PC-9 (cell line): ENCODE measurements at regions of chr17 and their contacts with region 1.

Region 1: DNA sequence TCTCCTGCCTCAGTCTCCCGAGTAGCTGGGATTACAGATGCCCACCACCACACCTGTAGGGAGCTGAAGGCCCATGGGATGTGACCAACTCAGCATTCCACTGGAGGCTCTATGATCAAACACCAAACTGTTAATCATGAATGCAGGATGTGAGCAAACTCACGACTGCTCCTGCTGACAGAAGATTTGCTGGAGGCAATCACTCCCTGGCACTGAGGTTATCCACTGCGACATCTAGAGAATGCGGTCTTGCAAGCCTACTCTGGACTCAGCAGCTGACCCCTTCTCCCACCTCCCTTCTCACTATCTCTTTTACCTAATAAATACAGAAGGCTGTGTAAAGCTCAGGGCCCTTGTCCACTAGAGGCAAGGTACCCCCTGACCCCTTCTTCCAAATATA is 4.9 kb downstream of the TEX14 start:
- DNase-seq: peak in 1 of 2 experiments; percentile 65
- H3K4me3 ChIP-seq: no peak overlapping the region
- H3K27ac ChIP-seq: no peak overlapping the region
- H3K4me1 ChIP-seq: peaks cover 5% of the 10 kb centered on the region
- H3K27me3 ChIP-seq: no peaks in the 10 kb centered on the region
- CTCF ChIP-seq: no peak

Region 2: DNA sequence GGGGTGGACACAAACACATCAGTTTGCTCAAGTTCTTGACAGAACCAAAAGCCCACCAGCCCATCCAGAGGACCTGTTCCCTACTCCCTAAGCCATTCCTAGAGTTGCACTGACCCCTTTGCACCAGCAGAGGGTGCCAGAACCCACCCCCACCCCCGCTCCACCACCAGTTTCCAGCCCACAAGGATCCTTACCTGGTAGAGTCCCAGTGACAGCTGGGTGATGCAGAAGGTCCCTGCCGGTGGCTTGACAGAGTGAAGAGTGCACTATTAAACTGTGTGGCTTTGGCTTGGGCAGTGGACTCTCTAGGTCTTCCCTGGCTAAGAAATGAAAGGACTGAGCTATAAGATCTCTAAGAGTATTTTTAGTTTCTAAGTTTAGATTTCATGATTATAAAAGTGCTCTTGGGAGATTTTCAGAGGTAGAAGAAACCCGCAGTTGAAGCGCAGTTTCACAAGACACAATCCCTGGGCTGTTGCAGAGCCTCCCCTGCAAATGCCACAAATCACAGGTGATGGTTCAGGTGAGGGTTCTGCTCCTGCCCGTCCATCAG is 99.2 kb before region 1 on chr17:
- CTCF ChIA-PET with region 1: no interaction called
- POLR2A ChIA-PET with region 1: interaction called, 11 read pairs
- intact Hi-C with region 1: no loop called
- DNase-seq: peak; percentile 41 to 55
- H3K4me3 ChIP-seq: no peak overlapping the region
- H3K27ac ChIP-seq: no peak overlapping the region
- H3K4me1 ChIP-seq: no peaks in the 10 kb centered on the region
- H3K27me3 ChIP-seq: no peaks in the 10 kb centered on the region
- CTCF ChIP-seq: peak; percentile 98